HepG2 (cell line): ENCODE measurements at regions of chr4 and their contacts with region 1.

Region 1: DNA sequence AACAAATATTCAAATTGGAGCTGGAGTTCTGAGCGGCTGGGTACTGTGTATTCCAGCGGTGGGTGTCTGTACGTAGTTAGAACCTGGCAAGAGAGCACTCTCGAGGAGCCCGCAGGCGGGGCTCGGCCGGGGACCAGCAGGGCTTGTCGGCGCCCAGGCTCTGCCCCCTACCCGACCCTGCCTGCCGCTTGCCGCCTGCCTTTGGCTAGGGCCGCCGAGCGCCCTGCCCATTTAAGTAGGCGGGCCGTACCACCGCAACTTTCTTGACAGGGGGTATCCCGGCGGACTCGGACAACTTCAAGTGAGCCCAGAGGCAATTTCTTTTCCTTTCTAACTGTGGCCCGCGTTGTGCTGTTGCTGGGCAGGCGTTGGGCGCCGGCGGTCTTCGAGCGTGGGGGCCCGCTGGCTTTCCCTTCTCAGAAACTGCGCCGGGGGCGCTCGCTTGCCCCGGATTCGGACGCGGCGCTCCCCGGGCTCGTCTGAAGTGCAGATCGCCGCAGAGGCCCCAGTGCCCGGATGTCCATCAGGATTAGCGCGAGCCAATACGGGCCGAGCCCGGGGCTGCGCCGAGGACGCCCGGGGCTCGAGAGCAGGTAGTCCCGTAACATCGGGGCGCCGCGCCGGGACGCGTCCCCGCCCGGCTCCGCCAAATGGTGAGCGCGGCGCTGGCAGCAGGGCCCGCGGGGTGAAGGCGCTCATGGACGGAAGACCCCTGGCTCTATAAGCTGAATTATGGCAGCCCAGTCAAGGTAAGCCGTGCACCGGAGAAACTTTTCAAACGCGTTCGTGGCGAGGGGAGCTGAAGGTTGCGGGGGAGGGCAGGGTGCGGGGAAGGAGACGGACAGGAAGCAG is 72.1 kb downstream of the AFF1 start:
- DNase-seq: peak; percentile 84
- ATAC-seq: peak; percentile 96
- H3K4me3 ChIP-seq: peak overlapping the region; percentile 71 to 85 (median 74)
- H3K27ac ChIP-seq: peak overlapping the region; percentile 99
- H3K4me1 ChIP-seq: peaks cover 71% of the 10 kb centered on the region
- H3K27me3 ChIP-seq: no peaks in the 10 kb centered on the region; a peak in 1 of 5 replicates
- CTCF ChIP-seq: peak; percentile 21; the same call in 1 of the 2 replicates
- EP300 ChIP-seq: peak in 1 of 2 experiments; percentile 12; a peak in 1 of 4 replicates
- POLR2A ChIP-seq: peak; percentile 99
- RAD21 ChIP-seq: peak; percentile 59

Region 2: GRCh38 chr4:86921608-86922252 is 85.2 kb before region 1 on chr4:
- CTCF ChIA-PET with region 1: interaction called, 5 read pairs
- POLR2A ChIA-PET with region 1: interaction called, 17 read pairs
- in situ Hi-C with region 1: no loop called
- intact Hi-C with region 1: loop called (anchors 1 kb)
- DNase-seq: no peak
- ATAC-seq: no peak
- H3K4me3 ChIP-seq: no peak overlapping the region
- H3K27ac ChIP-seq: no peak overlapping the region
- H3K4me1 ChIP-seq: peaks cover 14% of the 10 kb centered on the region
- H3K27me3 ChIP-seq: no peaks in the 10 kb centered on the region
- CTCF ChIP-seq: no peak
- EP300 ChIP-seq: no peak
- POLR2A ChIP-seq: no peak
- RAD21 ChIP-seq: no peak

Region 3: GRCh38 chr4:86934771-86935565 is 71.9 kb before region 1 on chr4 and contains the start of gene AFF1:
- CTCF ChIA-PET with region 1: no interaction called
- POLR2A ChIA-PET with region 1: interaction called, 81 read pairs
- in situ Hi-C with region 1: loop called (anchors 5 kb)
- intact Hi-C with region 1: loop called (anchors 1 kb)
- DNase-seq: peak; percentile 86
- ATAC-seq: peak; percentile 88
- H3K4me3 ChIP-seq: peak within 1 kb of the TSS; percentile 80 to 96 (median 89)
- H3K27ac ChIP-seq: peak within 1 kb of the TSS; percentile 90
- H3K4me1 ChIP-seq: peaks cover 42% of the 10 kb centered on the region
- H3K27me3 ChIP-seq: no peaks in the 10 kb centered on the region; a peak in 1 of 5 replicates
- CTCF ChIP-seq: peak; percentile 69
- EP300 ChIP-seq: no peak
- POLR2A ChIP-seq: peak; percentile 87
- RAD21 ChIP-seq: peak; percentile 84
- total RNA-seq, gene AFF1: 15.9 and 19.6 TPM in 2 replicates

Region 4: GRCh38 chr4:86961605-86962295 is 45.2 kb before region 1 on chr4:
- CTCF ChIA-PET with region 1: no interaction called
- POLR2A ChIA-PET with region 1: interaction called, 12 read pairs
- in situ Hi-C with region 1: no loop called
- intact Hi-C with region 1: no loop called
- DNase-seq: no peak
- ATAC-seq: no peak
- H3K4me3 ChIP-seq: no peak overlapping the region
- H3K27ac ChIP-seq: no peak overlapping the region
- H3K4me1 ChIP-seq: peaks cover 55% of the 10 kb centered on the region
- H3K27me3 ChIP-seq: no peaks in the 10 kb centered on the region
- CTCF ChIP-seq: no peak
- EP300 ChIP-seq: no peak
- POLR2A ChIP-seq: no peak
- RAD21 ChIP-seq: no peak

Region 5: DNA sequence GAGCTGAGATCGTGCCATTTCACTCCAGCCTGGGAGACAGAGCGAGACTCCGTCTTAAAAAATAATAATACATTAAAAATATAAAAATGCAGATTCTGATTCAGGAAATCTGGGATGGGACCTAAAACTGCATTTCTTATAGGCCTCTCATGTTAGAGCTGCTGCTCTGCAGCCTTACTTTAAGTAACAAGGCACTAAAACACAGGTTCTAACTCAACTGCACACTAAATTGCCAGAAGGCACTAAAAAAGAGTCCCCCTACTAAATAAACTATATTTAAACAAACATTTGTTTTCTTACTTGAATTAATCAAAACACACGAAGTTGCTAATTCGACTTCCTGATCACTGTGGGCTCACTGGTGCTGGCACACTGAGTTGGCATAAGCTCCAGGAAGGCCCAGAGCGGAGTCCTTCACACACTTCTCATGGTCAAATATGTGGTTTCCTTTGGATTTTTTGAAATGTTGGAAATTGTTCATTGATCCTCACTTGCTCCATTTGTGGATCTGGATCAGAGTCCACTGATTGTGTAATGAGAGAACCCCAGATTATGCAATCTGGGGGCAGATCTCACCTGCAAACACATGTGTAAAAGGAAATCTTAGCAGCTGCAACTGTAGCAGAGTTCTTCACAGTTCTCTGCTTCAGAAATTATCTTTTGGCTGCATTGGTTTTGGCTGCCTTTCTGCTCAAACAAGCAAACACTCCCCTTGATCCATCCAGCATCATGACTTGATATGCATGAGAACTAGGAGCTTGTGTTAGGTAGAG is 12.8 kb before region 1 on chr4:
- CTCF ChIA-PET with region 1: no interaction called
- POLR2A ChIA-PET with region 1: interaction called, 16 read pairs
- in situ Hi-C with region 1: no loop called
- intact Hi-C with region 1: no loop called
- DNase-seq: peak; percentile 74
- ATAC-seq: peak; percentile 93
- H3K4me3 ChIP-seq: no peak overlapping the region; a peak in 1 of 6 replicates
- H3K27ac ChIP-seq: peak overlapping the region; percentile 76
- H3K4me1 ChIP-seq: peaks cover 37% of the 10 kb centered on the region
- H3K27me3 ChIP-seq: no peaks in the 10 kb centered on the region
- CTCF ChIP-seq: no peak
- EP300 ChIP-seq: peak; percentile 83 to 85
- POLR2A ChIP-seq: no peak
- RAD21 ChIP-seq: 0 out of 2 replicates have a peak, but pooled peaks have one; percentile 12